ENCODE measurements at regions of chr15 and their contacts with region 1.

Region 1: DNA sequence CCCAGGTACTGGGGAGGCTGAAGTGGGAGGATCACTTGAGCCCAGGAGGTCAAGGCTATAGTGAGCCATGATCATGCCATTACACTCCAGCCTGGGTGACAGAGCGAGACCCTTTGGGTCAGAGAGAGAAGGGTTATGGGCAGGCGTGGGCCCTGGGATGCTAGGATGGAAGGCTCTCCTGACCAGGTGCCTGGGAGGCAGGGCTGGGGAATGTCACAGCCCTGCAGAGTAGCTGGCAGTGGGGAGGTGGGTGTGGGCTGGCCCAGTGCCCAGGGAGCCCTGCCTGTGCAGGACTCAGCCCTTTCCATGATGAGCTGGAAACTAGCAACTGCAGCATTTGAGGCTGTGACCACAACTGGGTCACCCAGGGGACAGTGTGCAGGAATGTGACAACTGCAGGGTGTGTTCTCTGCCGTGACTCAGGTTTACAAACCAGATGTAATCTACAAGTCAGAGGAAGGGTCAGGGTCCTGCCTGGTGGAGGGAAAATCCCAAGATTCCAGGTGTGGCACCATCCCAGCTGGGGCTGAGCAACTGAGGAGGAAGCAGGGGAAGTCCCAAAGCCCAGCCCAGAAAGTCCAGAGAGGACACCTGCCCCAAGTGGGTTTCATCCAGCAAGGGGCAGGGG is 45.4 kb downstream of the SLC28A1 start:
- DNase-seq: peak; percentile 41
- ATAC-seq: peak; percentile 14
- H3K4me3 Mint-ChIP-seq: no peak overlapping the region
- H3K27ac Mint-ChIP-seq: no peak overlapping the region
- H3K4me1 Mint-ChIP-seq: peaks cover 5% of the 10 kb centered on the region
- H3K27me3 Mint-ChIP-seq: no peaks in the 10 kb centered on the region
- CTCF ChIP-seq: no peak

Region 2: DNA sequence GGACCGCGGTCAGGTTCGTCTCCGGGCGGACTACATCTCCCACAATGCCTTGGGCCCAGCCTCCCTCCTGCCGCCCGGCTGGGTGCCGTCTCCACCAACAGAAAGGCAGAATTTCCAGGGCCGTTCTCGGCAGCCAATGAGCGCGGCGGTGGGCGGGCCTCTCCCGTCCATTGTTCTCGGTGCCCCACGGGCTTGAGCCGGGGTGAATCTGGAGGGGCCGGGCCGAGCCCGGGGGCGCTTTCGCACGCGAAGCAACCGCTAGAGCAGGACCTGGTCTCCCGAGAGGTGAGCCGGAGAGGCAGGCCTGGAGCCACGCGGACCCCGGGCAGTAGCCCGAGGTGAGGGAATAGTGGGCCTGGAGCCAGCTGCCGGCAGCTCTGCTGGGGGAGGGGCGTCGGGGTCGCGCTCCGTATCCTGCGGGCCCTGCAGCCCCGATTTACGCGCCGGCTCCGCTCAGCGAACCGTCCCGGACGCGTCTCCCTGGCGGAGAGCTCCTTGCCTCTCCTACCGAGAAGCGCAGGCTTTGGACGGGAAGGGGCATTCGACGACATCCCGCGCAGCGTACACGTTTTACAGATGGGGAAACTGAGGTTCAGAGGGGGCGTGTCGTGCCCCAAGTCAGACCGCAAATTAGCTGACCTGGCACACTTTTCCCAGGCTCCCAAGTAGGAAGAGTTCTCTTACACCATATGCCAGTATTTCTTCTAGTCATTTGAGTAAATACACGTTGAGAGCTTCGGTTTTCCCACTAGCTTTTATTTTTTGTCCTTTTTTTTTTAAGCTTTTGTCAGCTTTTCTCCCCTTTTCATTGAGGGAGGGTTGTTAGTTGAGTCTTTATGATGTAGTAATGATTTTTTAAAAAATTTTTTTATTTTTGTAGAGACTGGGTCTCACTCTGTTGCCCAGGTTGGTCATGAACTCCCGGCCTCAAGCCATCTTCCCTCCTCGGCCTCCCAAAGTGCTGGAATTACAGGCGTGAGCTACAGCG is 328.7 kb before region 1 on chr15 and contains the start of gene ZSCAN2:
- CTCF ChIA-PET with region 1: interaction called, 20 read pairs
- POLR2A ChIA-PET with region 1: no interaction called
- intact Hi-C with region 1: no loop called
- DNase-seq: peak; percentile 98
- ATAC-seq: peak; percentile 96
- H3K4me3 Mint-ChIP-seq: peak within 1 kb of the TSS; percentile 91
- H3K27ac Mint-ChIP-seq: peak within 1 kb of the TSS; percentile 80
- H3K4me1 Mint-ChIP-seq: peaks cover 73% of the 10 kb centered on the region
- H3K27me3 Mint-ChIP-seq: no peaks in the 10 kb centered on the region
- CTCF ChIP-seq: no peak
- total RNA-seq, gene ZSCAN2: 6.6 to 7.6 TPM

Region 3: GRCh38 chr15:84761607-84762131 is 168.2 kb before region 1 on chr15:
- CTCF ChIA-PET with region 1: no interaction called
- POLR2A ChIA-PET with region 1: no interaction called
- intact Hi-C with region 1: no loop called
- DNase-seq: no peak
- ATAC-seq: peak; percentile 82
- H3K4me3 Mint-ChIP-seq: no peak overlapping the region
- H3K27ac Mint-ChIP-seq: no peak overlapping the region
- H3K4me1 Mint-ChIP-seq: peaks cover 10% of the 10 kb centered on the region
- H3K27me3 Mint-ChIP-seq: no peaks in the 10 kb centered on the region
- CTCF ChIP-seq: no peak

Region 4: GRCh38 chr15:84840741-84841429 is 89.0 kb before region 1 on chr15:
- CTCF ChIA-PET with region 1: interaction called, 11 read pairs
- POLR2A ChIA-PET with region 1: no interaction called
- intact Hi-C with region 1: loop called (anchors 10 kb)
- DNase-seq: no peak
- ATAC-seq: no peak
- H3K4me3 Mint-ChIP-seq: no peak overlapping the region
- H3K27ac Mint-ChIP-seq: no peak overlapping the region
- H3K4me1 Mint-ChIP-seq: no peaks in the 10 kb centered on the region
- H3K27me3 Mint-ChIP-seq: no peaks in the 10 kb centered on the region
- CTCF ChIP-seq: no peak

Region 5: GRCh38 chr15:84917452-84917851 is 12.4 kb before region 1 on chr15:
- CTCF ChIA-PET with region 1: interaction called, 10 read pairs
- POLR2A ChIA-PET with region 1: no interaction called
- intact Hi-C with region 1: no loop called
- DNase-seq: no peak
- ATAC-seq: no peak
- H3K4me3 Mint-ChIP-seq: no peak overlapping the region
- H3K27ac Mint-ChIP-seq: no peak overlapping the region
- H3K4me1 Mint-ChIP-seq: peaks cover 16% of the 10 kb centered on the region
- H3K27me3 Mint-ChIP-seq: peaks cover 6% of the 10 kb centered on the region
- CTCF ChIP-seq: no peak

Region 6: DNA sequence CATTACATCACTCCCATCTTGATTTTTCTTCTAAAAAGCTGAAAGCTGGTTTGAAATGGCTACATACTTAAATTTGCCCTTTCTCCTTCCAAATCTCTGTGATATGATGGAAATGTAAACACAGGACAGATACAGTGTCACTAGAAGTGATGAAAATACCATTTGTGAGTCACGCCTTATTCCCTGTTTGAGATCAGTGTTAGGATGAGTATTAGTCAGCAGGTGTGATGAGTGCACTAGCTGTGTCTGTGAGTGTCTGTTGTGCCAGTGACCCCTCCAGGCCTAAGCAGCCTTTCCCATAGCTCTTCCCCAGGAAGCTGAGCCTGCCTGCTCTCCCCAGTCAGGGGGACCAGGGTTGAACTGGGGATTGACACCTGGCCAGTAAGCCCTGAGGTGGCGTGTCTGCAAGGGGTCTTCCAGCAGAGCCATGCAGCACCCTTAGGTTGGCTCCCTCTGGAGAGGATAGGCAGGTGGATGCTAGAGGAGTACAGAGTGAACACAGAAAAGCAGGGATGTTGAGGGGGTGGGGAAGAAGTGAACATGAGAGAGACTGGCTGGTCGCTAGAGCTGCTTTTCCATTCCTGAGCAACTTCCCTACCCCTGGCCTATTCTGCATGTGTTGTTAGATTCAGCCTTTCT is 143.8 kb after region 1 on chr15:
- CTCF ChIA-PET with region 1: no interaction called
- POLR2A ChIA-PET with region 1: no interaction called
- intact Hi-C with region 1: no loop called
- DNase-seq: peak; percentile 39
- ATAC-seq: peak; percentile 97
- H3K4me3 Mint-ChIP-seq: no peak overlapping the region
- H3K27ac Mint-ChIP-seq: peak overlapping the region; percentile 55
- H3K4me1 Mint-ChIP-seq: peaks cover 14% of the 10 kb centered on the region
- H3K27me3 Mint-ChIP-seq: no peaks in the 10 kb centered on the region
- CTCF ChIP-seq: no peak

Region 7: DNA sequence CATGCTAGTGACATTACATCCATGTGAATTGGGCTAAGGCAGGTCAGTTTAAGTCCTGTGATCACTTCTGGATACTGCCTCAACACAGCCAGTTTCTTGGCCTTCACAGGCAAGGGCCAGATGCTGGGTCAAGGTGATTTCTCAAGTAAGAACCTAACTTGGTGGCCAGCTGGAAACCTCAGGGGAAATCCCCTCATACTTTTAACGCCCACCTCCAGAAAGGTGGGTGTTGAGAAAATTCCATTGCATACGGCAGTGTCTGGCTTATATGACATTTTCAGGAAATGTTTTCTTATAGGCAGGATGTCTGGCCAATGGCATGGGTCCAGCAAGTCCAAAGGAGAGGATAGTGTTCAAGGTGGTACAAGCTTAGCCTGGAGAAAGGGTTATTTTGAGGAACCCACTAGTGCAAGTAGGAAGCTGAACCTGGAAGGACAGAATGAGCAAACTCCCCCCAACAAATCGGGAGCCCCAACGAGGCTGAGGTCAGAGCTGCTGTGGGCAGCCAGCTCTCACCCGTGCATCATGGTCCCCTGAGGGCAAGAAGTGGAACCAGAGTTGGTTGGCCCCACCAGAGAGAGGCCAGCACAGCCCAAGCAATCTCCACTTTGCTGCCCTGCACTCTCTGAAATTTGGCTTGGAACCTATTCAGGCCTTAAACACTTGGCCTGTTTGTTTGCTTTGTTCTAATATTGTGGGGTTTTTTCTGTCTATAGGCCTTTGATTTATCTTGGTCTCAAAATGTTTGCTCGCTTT is 187.2 kb after region 1 on chr15:
- CTCF ChIA-PET with region 1: no interaction called
- POLR2A ChIA-PET with region 1: no interaction called
- intact Hi-C with region 1: no loop called
- DNase-seq: peak; percentile 36
- ATAC-seq: peak; percentile 47
- H3K4me3 Mint-ChIP-seq: no peak overlapping the region
- H3K27ac Mint-ChIP-seq: peak overlapping the region; percentile 75
- H3K4me1 Mint-ChIP-seq: peaks cover 18% of the 10 kb centered on the region
- H3K27me3 Mint-ChIP-seq: no peaks in the 10 kb centered on the region
- CTCF ChIP-seq: no peak

Measured in activated CD8-positive, alpha-beta T cell treated with anti-CD3 and anti-CD28 coated beads for 36 hours (primary cell).